ENCODE measurements at regions of chr17 and their contacts with region 1.

Region 1: DNA sequence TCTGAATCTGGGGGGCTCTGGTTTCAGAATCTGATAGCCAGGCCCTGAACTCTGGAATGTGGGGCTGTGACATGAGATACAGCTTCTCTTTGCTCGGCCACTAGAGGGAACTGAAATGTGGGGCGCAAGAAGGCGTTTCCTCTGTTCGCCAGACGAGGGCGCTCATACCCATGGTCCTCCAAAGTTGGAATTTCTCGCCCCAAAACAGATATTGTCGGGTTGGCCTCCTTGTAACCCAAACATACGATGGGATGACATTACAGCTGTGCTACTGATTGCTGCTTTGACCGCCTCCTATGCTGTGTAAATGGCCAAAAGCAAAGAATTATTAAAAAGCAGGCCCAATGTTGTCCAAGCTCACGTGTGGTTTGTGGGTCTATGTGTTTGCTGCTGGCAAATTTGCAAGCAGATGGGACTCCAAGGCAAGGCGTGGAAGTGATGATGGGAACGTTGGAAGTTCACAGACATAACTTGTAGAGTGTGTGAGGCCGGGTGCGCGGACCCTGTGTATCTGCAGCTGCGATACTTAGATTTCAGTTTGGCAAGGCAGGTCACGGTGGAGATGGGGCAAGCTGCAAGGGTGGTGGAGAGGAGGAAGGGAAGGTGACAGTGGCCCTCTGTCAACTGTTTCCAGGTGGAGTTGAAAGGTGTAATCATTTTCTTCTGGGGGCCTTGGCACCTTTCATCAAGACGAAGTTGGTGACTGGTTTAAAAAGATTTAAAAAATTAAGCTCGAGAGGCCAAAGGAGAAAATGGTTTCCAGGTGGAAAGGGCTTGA is 13.0 kb upstream of the MSI2 start:
- DNase-seq: peak; percentile 84
- ATAC-seq: peak; percentile 95
- H3K4me3 ChIP-seq: no peak overlapping the region
- H3K4me3 Mint-ChIP-seq: no peak overlapping the region
- H3K27ac ChIP-seq: no peak overlapping the region
- H3K27ac Mint-ChIP-seq: no peak overlapping the region
- H3K4me1 ChIP-seq: peaks cover 0 to 3% of the 10 kb centered on the region in 2 donors
- H3K4me1 Mint-ChIP-seq: no peaks in the 10 kb centered on the region
- H3K27me3 ChIP-seq: peaks cover 0 to 9% (median 4%) of the 10 kb centered on the region in 4 experiments
- H3K27me3 Mint-ChIP-seq: peaks cover 3% of the 10 kb centered on the region
- CTCF ChIP-seq: peak; percentile 100

Region 2: DNA sequence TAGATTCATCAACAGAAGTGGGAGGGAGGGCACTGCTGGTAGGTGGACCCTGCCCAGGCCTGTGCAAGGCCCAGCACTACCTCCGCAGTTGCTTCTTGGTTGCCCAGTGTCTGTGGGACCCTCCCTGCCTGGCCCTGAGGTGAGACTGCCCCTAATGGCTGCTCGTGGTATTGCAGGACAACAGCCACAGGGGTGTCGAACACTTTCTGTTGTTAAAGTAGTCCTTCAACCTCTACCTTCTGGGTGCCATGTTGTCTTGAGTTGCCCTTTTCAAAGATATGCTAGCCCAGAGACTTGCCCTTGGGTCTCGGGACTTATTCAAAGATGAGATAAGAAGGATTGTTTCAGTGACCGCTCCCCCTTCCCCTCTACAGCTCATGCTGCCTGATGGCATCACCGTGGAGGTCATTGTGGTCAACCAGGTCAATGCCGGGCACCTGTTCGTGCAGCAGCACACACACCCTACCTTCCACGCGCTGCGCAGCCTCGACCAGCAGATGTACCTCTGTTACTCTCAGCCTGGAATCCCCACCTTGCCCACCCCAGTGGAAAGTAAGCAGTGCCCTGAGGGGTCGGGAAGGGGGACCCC is 129.2 kb before region 1 on chr17:
- CTCF ChIA-PET with region 1: no interaction called
- POLR2A ChIA-PET with region 1: no interaction called
- intact Hi-C with region 1: no loop called
- DNase-seq: peak; percentile 69
- ATAC-seq: peak; percentile 82
- H3K4me3 ChIP-seq: no peak overlapping the region
- H3K4me3 Mint-ChIP-seq: no peak overlapping the region
- H3K27ac ChIP-seq: no peak overlapping the region
- H3K27ac Mint-ChIP-seq: no peak overlapping the region
- H3K4me1 ChIP-seq: no peaks in the 10 kb centered on the region
- H3K4me1 Mint-ChIP-seq: no peaks in the 10 kb centered on the region
- H3K27me3 ChIP-seq: no peaks in the 10 kb centered on the region
- H3K27me3 Mint-ChIP-seq: no peaks in the 10 kb centered on the region
- CTCF ChIP-seq: peak; percentile 90

Region 3: DNA sequence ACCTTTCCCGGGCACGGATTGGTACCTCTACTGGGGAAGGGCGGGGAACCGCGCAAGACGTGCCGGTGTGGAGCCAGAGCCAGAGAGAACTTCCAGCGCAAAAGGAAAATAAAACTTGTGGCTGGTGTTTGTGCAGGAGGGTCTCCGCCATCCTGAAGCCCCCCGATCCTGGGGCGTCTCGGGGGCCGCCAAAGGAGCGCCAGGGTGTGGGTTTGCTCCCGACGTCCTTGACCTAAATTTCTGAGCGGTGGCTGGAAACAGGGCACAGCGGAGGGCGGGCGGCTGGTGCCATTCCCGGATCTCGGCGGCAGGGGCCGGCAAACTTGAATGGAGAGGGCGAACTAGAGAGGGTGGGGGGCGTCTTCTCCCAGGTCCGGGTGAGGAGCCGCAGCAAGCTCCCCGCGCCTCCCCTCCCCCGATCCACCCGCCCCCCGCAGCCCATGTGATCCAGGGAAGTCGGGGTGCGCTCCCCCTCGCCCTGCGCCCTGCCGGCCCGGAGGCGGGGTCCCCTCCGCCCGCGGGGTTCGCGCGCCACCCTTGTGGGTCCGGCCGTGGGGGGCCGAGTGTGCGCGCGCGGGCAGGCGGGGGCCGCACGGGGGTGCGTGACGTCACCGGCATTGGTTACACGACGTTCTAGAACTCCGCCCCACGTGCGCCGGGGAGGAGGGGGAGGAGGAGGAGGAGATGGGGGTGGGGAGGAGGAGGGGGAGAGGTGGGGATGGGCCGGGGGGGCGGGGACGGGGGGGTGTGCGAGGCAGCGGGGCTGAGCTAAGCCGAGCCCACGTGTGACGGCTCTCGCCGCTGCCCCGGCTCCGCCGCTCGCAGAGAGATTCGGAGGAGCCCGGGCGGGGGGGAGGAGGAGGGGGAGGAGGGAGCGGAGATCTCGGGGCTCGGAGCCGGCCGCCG is 12.7 kb after region 1 on chr17 and contains the start of gene MSI2:
- CTCF ChIA-PET with region 1: interaction called, 30 read pairs
- POLR2A ChIA-PET with region 1: no interaction called
- intact Hi-C with region 1: no loop called
- DNase-seq: peak; percentile 94
- ATAC-seq: peak; percentile 79
- H3K4me3 ChIP-seq: peak within 1 kb of the TSS; percentile 67 to 97 (median 76)
- H3K4me3 Mint-ChIP-seq: peak within 1 kb of the TSS; percentile 92
- H3K27ac ChIP-seq: peak within 1 kb of the TSS; percentile 65 to 66
- H3K27ac Mint-ChIP-seq: peak within 1 kb of the TSS; percentile 85
- H3K4me1 ChIP-seq: peaks cover 34 to 44% of the 10 kb centered on the region in 2 donors
- H3K4me1 Mint-ChIP-seq: peaks cover 38% of the 10 kb centered on the region
- H3K27me3 ChIP-seq: no peaks in the 10 kb centered on the region
- H3K27me3 Mint-ChIP-seq: no peaks in the 10 kb centered on the region
- CTCF ChIP-seq: no peak
- total RNA-seq, gene MSI2: 196 and 222 TPM in 2 replicates

Region 4: GRCh38 chr17:57357399-57357807 is 114.0 kb after region 1 on chr17:
- CTCF ChIA-PET with region 1: interaction called, 15 read pairs
- POLR2A ChIA-PET with region 1: no interaction called
- intact Hi-C with region 1: no loop called
- DNase-seq: peak; percentile 29
- ATAC-seq: no peak
- H3K4me3 ChIP-seq: peak overlapping the region in 4 of 5 experiments; percentile 14 to 52 (median 26)
- H3K4me3 Mint-ChIP-seq: peak overlapping the region; percentile 84
- H3K27ac ChIP-seq: peak overlapping the region; percentile 43 to 59
- H3K27ac Mint-ChIP-seq: peak overlapping the region; percentile 78
- H3K4me1 ChIP-seq: peaks cover 40 to 44% of the 10 kb centered on the region in 2 donors
- H3K4me1 Mint-ChIP-seq: peaks cover 53% of the 10 kb centered on the region
- H3K27me3 ChIP-seq: no peaks in the 10 kb centered on the region
- H3K27me3 Mint-ChIP-seq: no peaks in the 10 kb centered on the region
- CTCF ChIP-seq: no peak

Region 5: DNA sequence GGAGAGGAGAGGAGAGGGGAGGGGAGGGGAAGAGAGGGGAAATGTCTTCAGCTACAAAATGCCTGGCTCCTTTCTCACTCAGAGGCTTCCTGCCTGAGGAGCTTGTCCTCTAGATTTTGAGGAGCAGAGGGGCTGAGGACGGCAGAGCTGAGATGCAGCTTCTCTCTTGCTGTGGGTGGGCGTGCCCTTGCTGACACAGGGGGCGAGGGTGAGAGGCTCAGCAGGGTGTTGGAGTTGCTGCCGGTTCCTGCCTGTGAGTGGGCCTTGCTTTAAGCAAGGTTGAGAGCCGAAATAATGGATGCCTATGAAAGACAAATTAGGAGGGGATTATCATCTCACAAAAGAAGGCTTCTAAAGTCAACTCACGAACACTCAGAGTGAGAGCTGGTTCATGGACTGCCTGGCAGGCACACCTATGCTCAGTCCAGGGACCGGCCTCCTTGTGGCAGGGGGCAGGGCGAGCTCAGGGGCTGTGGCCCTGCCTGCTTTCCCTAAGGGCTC is 228.6 kb after region 1 on chr17:
- CTCF ChIA-PET with region 1: interaction called, 11 read pairs
- POLR2A ChIA-PET with region 1: no interaction called
- intact Hi-C with region 1: no loop called
- DNase-seq: no peak
- ATAC-seq: no peak
- H3K4me3 ChIP-seq: no peak overlapping the region
- H3K4me3 Mint-ChIP-seq: no peak overlapping the region
- H3K27ac ChIP-seq: no peak overlapping the region
- H3K27ac Mint-ChIP-seq: no peak overlapping the region
- H3K4me1 ChIP-seq: peaks cover 20 to 24% of the 10 kb centered on the region in 2 donors
- H3K4me1 Mint-ChIP-seq: peaks cover 36% of the 10 kb centered on the region
- H3K27me3 ChIP-seq: no peaks in the 10 kb centered on the region
- H3K27me3 Mint-ChIP-seq: no peaks in the 10 kb centered on the region
- CTCF ChIP-seq: no peak

Region 6: DNA sequence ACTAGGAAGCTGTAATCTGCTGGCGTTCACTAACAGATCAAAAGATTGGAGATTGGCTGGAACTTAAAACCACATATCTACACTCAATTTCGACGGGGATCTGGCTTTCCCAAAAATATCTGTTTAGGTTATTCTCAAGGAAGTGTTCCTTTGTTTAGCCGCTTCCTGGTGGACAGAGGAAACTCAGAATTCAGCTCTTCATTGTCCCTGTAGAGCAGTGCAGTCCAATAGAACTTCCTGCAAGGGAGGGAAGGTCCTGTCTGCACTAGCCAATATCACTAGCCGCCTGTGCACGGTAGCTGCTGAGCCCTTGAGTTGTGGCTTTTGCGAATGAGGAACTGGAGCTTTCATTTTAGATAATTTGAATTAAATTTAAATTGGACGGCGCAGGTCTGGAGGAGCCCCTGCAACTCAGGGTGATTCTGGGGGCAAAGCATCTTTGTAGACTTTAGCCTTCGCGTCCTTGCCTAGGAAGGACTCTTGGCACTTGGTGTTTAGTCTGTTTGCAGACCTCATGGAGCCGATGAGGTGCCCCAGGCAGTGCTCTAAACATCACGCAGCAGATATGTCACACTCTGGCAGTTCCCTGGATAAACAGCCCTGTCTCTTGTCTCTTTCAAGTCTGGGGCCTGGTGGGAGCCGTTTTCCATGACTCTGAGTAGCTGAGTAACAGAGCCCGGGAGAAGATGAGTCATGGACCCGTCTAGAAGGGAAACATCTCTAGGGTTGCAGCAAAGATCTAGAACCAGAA is 379.5 kb after region 1 on chr17:
- CTCF ChIA-PET with region 1: interaction called, 18 read pairs
- POLR2A ChIA-PET with region 1: interaction called, 3 read pairs
- intact Hi-C with region 1: no loop called
- DNase-seq: peak; percentile 73
- ATAC-seq: peak; percentile 78
- H3K4me3 ChIP-seq: peak overlapping the region in 4 of 5 experiments; percentile 32 to 64 (median 49)
- H3K4me3 Mint-ChIP-seq: peak overlapping the region; percentile 81
- H3K27ac ChIP-seq: peak overlapping the region; percentile 59 to 73
- H3K27ac Mint-ChIP-seq: peak overlapping the region; percentile 85
- H3K4me1 ChIP-seq: peaks cover 34 to 42% of the 10 kb centered on the region in 2 donors
- H3K4me1 Mint-ChIP-seq: peaks cover 45% of the 10 kb centered on the region
- H3K27me3 ChIP-seq: no peaks in the 10 kb centered on the region
- H3K27me3 Mint-ChIP-seq: no peaks in the 10 kb centered on the region
- CTCF ChIP-seq: no peak

Region 7: DNA sequence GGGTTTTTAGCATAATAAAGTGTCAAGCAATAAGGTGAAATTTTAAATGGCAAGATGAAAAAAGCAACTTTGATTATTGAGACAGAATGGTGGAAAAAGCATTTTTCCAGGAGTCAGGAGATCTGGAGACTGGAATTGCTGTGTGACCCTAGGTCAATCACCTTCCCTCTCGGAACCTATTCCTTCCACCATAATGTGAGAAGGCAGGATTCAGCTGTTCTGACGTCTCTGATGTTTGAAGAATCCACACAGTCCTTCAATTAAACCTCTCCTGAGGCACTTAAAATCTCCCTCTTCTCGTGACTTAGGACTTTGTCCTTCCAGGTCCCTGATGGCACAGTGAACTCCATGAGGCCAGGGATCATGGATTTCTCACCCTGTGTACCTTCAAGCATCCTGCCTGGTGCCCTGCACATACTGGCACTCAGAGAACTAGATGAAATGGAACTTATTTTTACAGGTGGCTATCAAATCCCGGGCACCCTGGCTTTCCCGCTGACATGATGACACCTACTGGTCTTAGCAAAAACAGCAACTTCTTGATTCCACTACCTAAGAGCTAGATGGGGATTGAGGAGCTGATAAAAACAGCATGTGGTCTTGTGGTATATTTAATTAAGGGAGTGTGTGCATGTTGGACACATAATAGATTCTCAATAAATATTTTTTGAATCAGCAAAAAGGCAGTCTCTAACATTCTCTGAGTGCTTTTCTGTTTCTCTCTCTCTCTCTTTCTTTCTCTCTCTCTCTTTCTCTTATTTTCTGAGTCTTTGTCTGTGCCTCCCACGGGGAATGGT is 504.1 kb after region 1 on chr17:
- CTCF ChIA-PET with region 1: interaction called, 129 read pairs
- POLR2A ChIA-PET with region 1: no interaction called
- intact Hi-C with region 1: loop called (anchors 1 kb)
- DNase-seq: peak; percentile 75
- ATAC-seq: peak; percentile 73
- H3K4me3 ChIP-seq: no peak overlapping the region
- H3K4me3 Mint-ChIP-seq: no peak overlapping the region
- H3K27ac ChIP-seq: no peak overlapping the region
- H3K27ac Mint-ChIP-seq: no peak overlapping the region
- H3K4me1 ChIP-seq: peaks cover 12 to 14% of the 10 kb centered on the region in 2 donors
- H3K4me1 Mint-ChIP-seq: peaks cover 17% of the 10 kb centered on the region
- H3K27me3 ChIP-seq: peaks cover 0 to 4% (median 0%) of the 10 kb centered on the region in 4 experiments
- H3K27me3 Mint-ChIP-seq: peaks cover 14% of the 10 kb centered on the region
- CTCF ChIP-seq: peak; percentile 82

Measured in B cell (primary cell).